ENCODE measurements at regions of chr1 and their contacts with region 1.

Region 1: GRCh38 chr1:229674042-229674441 is 48.0 kb downstream of the URB2 start:
- DNase-seq: no peak
- H3K4me3 ChIP-seq: no peak overlapping the region
- H3K27ac ChIP-seq: no peak overlapping the region
- H3K4me1 ChIP-seq: no peaks in the 10 kb centered on the region
- H3K27me3 ChIP-seq: no peaks in the 10 kb centered on the region
- CTCF ChIP-seq: no peak
- POLR2A ChIP-seq: no peak

Region 2: DNA sequence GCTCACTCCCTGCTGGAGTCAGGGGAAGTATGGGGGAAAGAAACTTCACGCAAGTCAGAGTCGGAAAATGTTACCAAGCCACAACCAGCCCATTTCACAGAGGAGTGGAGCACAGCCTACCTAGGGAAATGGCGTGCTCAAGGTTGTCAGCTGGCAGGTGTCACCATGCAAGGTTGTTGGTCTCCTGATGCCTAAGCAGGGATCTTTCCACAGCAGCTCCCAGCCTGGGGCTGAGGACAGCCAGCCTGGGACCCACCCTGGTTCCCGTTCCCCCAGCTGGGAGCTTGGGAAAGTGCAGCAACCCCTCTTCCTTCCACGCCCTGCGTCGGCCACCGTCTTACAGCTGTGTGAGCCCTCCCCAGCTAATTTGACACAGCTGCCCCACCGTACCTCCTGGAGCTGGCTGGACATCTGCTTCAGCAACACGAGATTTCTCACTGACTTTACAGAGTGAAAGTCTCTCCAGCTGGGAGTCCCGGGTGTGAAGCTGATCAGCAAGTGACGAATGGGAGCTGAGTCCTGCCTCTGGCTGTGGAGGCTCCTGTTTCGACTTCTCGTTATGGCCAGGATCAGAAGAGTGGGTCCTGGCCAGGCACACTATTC is 627.7 kb before region 1 on chr1:
- intact Hi-C with region 1: no loop called
- DNase-seq: no peak
- H3K4me3 ChIP-seq: no peak overlapping the region
- H3K27ac ChIP-seq: no peak overlapping the region
- H3K4me1 ChIP-seq: peaks cover 0 to 19% (median 2%) of the 10 kb centered on the region in 6 donors
- H3K27me3 ChIP-seq: no peaks in the 10 kb centered on the region
- CTCF ChIP-seq: no peak
- POLR2A ChIP-seq: no peak

Region 3: GRCh38 chr1:229685149-229685548 is 11.1 kb after region 1 on chr1:
- intact Hi-C with region 1: loop called (anchors 1 kb)
- DNase-seq: no peak
- H3K4me3 ChIP-seq: no peak overlapping the region
- H3K27ac ChIP-seq: no peak overlapping the region
- H3K4me1 ChIP-seq: no peaks in the 10 kb centered on the region
- H3K27me3 ChIP-seq: no peaks in the 10 kb centered on the region
- CTCF ChIP-seq: no peak
- POLR2A ChIP-seq: no peak